Dendritic cell treated with granulocyte-macrophage colony-stimulating factor and Interleukin-4, amounts not matched to agents 40 ng/mL and 50 ng/mL, for 4 days (primary cell): ENCODE measurements at regions of chr4 and their contacts with region 1.

Region 1: DNA sequence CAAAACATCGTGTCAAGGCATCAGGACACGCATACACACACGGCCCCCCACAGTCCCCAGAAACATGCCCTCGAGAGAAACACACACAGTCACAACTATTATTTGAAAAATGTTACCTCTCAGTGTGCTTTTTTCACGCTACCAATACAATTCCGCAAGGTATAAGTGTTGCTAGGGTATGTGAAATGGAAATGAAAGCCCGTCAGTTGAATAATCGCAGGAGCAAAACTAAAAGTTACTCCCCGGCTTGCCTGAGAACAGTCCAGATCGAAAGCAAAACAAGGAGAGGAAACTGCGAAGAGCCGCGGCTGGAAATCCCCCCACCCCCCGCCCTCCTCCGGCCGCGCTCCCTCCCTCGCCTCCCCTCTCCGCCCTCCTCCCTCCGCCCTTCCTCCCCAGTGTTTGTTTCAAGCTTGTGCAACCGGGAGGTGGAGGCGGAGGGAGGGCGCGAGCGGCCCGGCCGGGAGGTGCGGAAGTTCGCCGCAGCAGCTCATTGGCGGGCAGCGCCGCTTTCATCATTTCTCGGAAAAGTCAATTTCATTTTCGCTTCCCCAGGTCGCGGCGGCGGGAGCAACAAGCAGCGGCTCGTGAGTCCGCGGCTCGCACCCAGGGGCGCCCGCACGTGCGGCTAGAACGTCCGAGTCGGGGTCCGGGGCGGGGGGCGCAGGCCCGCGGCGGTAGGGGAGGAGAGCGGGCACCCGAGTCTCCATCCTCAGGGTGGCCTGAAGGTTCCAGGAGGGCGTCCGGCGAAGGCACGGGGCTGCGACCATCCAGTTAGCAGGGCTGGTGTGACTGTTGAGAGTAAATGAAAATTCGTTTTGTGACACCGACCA is at the start of gene IRF2:
- H3K4me3 Mint-ChIP-seq: peak within 1 kb of the TSS; percentile 96
- H3K27ac Mint-ChIP-seq: peak within 1 kb of the TSS; percentile 98
- H3K4me1 Mint-ChIP-seq: peaks cover 51% of the 10 kb centered on the region
- H3K27me3 Mint-ChIP-seq: no peaks in the 10 kb centered on the region

Region 2: GRCh38 chr4:184343502-184344177 is 130.8 kb before region 1 on chr4:
- intact Hi-C with region 1: loop called (anchors 2 kb)
- H3K4me3 Mint-ChIP-seq: peak overlapping the region; percentile 84
- H3K27ac Mint-ChIP-seq: peak overlapping the region; percentile 94
- H3K4me1 Mint-ChIP-seq: peaks cover 71% of the 10 kb centered on the region
- H3K27me3 Mint-ChIP-seq: no peaks in the 10 kb centered on the region

Region 3: GRCh38 chr4:184437565-184438265 is 36.8 kb before region 1 on chr4:
- intact Hi-C with region 1: loop called (anchors 5 kb)
- H3K4me3 Mint-ChIP-seq: peak overlapping the region; percentile 44
- H3K27ac Mint-ChIP-seq: peak overlapping the region; percentile 73
- H3K4me1 Mint-ChIP-seq: peaks cover 69% of the 10 kb centered on the region
- H3K27me3 Mint-ChIP-seq: no peaks in the 10 kb centered on the region

Region 4: DNA sequence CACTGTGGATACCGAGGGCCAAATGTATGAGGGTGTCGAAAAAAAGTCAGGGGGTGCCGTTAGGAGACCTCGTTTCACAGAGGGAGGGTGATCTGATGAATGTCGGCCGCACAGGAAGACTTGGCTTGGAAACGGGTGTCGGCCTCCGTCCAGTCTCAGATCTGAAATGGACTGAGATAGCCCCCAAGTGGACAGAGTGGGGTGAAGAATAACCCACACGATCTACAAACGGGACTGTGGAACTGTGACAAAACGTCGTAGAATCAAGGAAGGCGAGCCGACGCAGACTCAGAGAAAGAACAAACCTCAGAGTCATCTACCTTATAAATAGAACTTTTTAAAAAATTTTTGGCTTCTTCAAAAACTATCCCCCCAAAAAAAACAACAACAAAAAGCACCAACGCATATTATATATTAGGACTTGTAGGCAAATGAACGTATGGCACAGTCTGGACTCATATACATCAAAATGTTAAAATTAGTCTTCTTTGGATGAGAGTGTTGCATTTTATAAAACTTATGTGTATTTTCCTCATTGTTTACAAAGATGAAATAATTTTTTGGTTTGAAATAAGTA is 63.6 kb after region 1 on chr4:
- intact Hi-C with region 1: loop called (anchors 1 kb)
- H3K4me3 Mint-ChIP-seq: peak overlapping the region; percentile 92
- H3K27ac Mint-ChIP-seq: peak overlapping the region; percentile 97
- H3K4me1 Mint-ChIP-seq: peaks cover 31% of the 10 kb centered on the region
- H3K27me3 Mint-ChIP-seq: no peaks in the 10 kb centered on the region

Region 5: DNA sequence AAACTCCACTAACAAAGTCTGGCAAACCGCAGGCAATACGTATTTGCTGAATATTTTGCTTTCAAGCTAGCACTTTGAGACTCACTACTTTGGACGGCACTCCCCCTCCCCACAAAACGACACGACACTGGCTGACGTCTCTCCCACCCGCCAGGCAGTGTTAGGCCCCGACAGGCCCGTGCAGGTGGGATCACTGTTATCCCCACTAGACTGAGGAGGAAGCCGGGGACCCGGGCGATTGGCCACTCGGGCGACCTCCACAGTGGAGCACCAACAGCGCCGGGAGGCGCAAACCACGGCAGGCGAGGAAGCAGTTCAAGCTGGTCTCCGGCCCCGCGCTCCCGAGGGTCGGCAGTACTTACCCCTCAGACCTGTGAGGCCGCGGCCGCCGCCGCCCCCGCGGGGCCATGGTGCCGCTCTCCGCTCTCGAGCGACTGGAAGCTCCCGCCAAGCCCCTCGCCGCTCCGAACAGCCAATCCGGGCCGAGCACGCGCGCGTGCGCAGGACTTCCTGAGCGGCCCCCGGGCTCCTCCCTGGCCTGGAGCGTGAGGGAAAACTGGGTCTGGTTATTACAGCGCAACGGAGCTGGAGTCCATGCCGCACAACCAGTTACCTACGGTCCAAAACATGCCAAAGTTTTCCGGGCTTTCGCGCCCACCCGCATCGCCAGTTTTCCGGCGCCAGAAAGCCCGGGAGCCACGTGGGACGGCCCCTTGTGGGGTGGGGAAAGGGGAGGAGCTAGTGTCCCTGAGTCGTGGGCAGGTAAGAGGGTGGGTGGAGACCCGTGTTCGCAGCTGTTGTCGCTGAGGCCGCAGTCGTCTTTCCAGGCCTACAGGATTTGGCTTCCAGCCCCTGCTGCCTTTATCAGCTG is 259.4 kb after region 1 on chr4 and contains the start of gene CENPU:
- intact Hi-C with region 1: loop called (anchors 10 kb)
- H3K4me3 Mint-ChIP-seq: peak within 1 kb of the TSS; percentile 92
- H3K27ac Mint-ChIP-seq: peak within 1 kb of the TSS; percentile 88
- H3K4me1 Mint-ChIP-seq: peaks cover 24% of the 10 kb centered on the region
- H3K27me3 Mint-ChIP-seq: no peaks in the 10 kb centered on the region